ENCODE measurements at regions of chr19 and their contacts with region 1.

Region 1: DNA sequence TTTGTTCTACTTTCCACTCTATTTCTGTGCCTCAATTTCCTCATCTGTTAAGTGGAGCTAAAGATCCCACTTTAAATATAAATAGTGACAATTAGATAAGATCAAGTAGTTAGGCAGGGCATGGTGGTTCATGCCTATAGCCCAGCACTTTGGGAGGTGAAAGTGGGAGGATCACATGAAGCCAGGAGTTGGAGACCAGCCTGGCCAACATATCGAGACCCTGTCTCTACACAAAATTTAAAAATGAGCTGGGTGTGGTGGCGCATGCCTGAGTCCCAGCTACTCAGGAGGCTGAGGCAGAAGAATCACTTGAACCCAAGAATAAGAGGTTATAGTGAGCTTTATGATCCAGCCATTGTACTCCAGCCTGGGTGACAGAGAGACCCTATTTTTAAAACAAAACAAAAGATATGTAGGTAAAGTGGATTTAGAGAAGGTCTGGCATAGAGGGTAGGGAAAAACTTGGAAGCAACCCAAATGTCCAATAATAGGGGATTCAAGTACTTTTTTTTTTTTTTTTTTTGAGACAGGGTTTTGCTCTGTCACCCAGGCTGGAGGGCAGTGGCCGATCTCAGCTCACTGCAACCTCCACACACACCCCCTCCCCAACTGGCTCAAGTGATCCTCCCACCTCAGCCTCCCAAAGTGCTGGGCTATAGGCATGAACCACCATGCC is 5.9 kb upstream of the PAK4 start:
- DNase-seq: no peak
- H3K4me3 ChIP-seq: no peak overlapping the region
- H3K27ac ChIP-seq: no peak overlapping the region
- H3K4me1 ChIP-seq: no peaks in the 10 kb centered on the region
- H3K27me3 ChIP-seq: no peaks in the 10 kb centered on the region
- CTCF ChIP-seq: no peak
- POLR2A ChIP-seq: no peak

Region 2: GRCh38 chr19:39328046-39328705 is 208.5 kb after region 1 on chr19:
- intact Hi-C with region 1: loop called (anchors 2 kb)
- DNase-seq: peak; percentile 82 to 89
- H3K4me3 ChIP-seq: no peak overlapping the region
- H3K27ac ChIP-seq: no peak overlapping the region
- H3K4me1 ChIP-seq: no peaks in the 10 kb centered on the region
- H3K27me3 ChIP-seq: no peaks in the 10 kb centered on the region
- CTCF ChIP-seq: peak; percentile 84 to 95 (median 92)
- POLR2A ChIP-seq: no peak